GM12878 (cell line): ENCODE measurements at regions of chr3 and their contacts with region 1.

Region 1: DNA sequence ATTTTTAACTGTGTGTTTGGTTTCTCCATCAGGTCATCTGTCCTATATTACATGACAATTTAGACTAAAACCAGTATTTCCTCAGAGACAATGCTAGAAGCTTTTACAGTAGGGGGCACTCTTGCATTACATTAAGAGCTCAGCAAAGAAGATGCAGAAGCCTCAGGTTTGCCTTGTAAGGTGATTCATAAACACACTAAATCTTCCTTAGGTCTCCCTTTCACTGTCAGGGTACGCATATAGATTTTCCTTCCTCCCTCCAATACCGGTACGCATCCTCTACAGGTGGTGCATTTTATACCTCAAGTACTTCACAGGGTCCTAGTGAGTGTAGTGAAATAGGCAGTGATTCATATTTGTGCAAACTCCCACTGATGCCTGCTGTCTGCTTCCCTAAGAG is 46.5 kb downstream of the CD86 start:
- DNase-seq: peak; percentile 92
- ATAC-seq: peak; percentile 66
- H3K4me3 ChIP-seq: peak overlapping the region; percentile 17; the same call in 1 of the 2 replicates
- H3K27ac ChIP-seq: peak overlapping the region; percentile 76
- H3K4me1 ChIP-seq: peaks cover 71% of the 10 kb centered on the region
- H3K27me3 ChIP-seq: no peaks in the 10 kb centered on the region
- CTCF ChIP-seq: peak; percentile 57 to 88 (median 70)
- EP300 ChIP-seq: no peak
- POLR2A ChIP-seq: no peak
- RAD21 ChIP-seq: peak; percentile 97

Region 2: GRCh38 chr3:122004991-122005565 is 96.6 kb before region 1 on chr3:
- CTCF ChIA-PET with region 1: interaction called, 21 read pairs
- POLR2A ChIA-PET with region 1: interaction called, 19 read pairs
- RAD21 ChIA-PET with region 1: interaction called, 137 read pairs
- SMC1A ChIA-PET with region 1: interaction called, 882 read pairs
- in situ Hi-C with region 1: no loop called
- intact Hi-C with region 1: loop called (anchors 5 kb)
- DNase-seq: peak; percentile 74
- ATAC-seq: peak; percentile 78
- H3K4me3 ChIP-seq: peak overlapping the region; percentile 46; the same call in 1 of the 2 replicates
- H3K27ac ChIP-seq: peak overlapping the region; percentile 91
- H3K4me1 ChIP-seq: peaks cover 58% of the 10 kb centered on the region
- H3K27me3 ChIP-seq: no peaks in the 10 kb centered on the region
- CTCF ChIP-seq: 0 out of 6 replicates have a peak, but pooled peaks of 1 of the 3 experiments have one; percentile 3
- EP300 ChIP-seq: peak; percentile 11 to 65; a peak in 3 of 4 replicates
- POLR2A ChIP-seq: 0 out of 2 replicates have a peak, but pooled peaks have one; percentile 35
- RAD21 ChIP-seq: no peak

Region 3: DNA sequence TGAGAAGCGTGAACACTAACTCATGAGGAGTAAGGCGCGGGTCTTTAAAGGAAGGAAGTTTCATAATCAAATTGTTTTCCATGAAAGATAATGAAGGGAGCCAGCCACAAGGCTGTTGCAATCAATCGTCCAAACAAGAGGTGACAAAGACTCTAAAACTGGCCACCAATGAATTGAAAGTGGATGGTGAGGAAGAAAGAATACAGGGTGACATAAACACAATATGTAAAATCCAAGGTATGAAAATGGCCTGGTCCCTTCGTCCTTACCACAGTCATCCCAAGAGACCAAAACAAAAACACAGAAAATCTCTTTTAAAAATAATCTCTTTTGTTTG is 34.5 kb before region 1 on chr3:
- CTCF ChIA-PET with region 1: interaction called, 24 read pairs
- POLR2A ChIA-PET with region 1: interaction called, 14 read pairs
- RAD21 ChIA-PET with region 1: interaction called, 72 read pairs
- SMC1A ChIA-PET with region 1: interaction called, 93 read pairs
- in situ Hi-C with region 1: no loop called
- intact Hi-C with region 1: no loop called
- DNase-seq: no peak
- ATAC-seq: peak; percentile 66
- H3K4me3 ChIP-seq: peak overlapping the region; percentile 52; the same call in 1 of the 2 replicates
- H3K27ac ChIP-seq: peak overlapping the region; percentile 66
- H3K4me1 ChIP-seq: peaks cover 57% of the 10 kb centered on the region
- H3K27me3 ChIP-seq: no peaks in the 10 kb centered on the region
- CTCF ChIP-seq: no peak
- EP300 ChIP-seq: 0 out of 4 replicates have a peak, but pooled peaks have one; percentile 20 to 29
- POLR2A ChIP-seq: no peak
- RAD21 ChIP-seq: no peak

Region 4: GRCh38 chr3:122245513-122246174 is 144.0 kb after region 1 on chr3:
- CTCF ChIA-PET with region 1: interaction called, 11 read pairs
- POLR2A ChIA-PET with region 1: interaction called, 178 read pairs
- RAD21 ChIA-PET with region 1: interaction called, 441 read pairs
- SMC1A ChIA-PET with region 1: interaction called, 58 read pairs
- in situ Hi-C with region 1: no loop called
- intact Hi-C with region 1: no loop called
- DNase-seq: no peak
- ATAC-seq: peak; percentile 51
- H3K4me3 ChIP-seq: peak overlapping the region; percentile 66
- H3K27ac ChIP-seq: peak overlapping the region; percentile 63
- H3K4me1 ChIP-seq: peaks cover 14% of the 10 kb centered on the region
- H3K27me3 ChIP-seq: no peaks in the 10 kb centered on the region
- CTCF ChIP-seq: peak in 2 of 3 experiments; percentile 23 to 28; a peak in 2 of 6 replicates
- EP300 ChIP-seq: no peak
- POLR2A ChIP-seq: no peak
- RAD21 ChIP-seq: no peak

Region 5: DNA sequence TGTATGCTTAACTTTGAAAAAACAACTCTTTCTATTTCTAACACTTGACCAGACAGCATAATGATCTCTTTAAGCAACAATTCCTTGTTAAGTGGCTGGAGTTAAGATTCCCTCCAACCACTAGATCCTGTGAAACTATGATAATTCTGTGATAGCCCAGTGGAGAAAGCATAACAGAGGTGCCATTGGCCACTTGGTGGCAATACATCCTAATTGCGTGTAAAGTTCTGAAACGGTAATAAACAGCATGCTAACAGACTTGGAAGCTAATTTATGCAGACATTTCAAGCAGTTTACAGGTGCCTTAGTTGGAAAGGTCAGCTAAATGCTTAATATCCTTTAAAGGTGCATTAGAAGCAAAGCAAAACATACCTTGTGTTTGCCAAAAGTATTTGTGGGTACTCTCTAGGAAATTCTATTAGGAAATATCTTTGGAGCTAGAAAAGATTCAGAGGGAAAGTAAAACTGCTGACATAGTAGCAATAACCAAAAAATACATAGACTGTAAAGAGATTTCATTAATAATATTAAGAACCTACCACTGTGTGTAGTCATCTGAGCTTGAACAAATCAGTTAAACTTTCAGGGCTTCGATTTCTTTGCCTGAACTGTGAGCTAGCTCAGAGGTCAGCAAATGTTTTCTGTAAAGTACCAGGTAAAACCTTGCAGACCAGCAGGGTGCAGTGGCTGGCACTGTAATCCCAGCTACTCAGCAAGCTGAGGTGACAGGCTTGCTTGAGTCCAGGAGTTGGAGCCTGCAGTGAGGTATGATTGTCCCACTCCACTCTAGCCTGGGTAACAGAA is 204.4 kb after region 1 on chr3:
- CTCF ChIA-PET with region 1: interaction called, 81 read pairs
- POLR2A ChIA-PET with region 1: no interaction called
- RAD21 ChIA-PET with region 1: interaction called, 81 read pairs
- SMC1A ChIA-PET with region 1: interaction called, 94 read pairs
- in situ Hi-C with region 1: loop called (anchors 5 kb)
- intact Hi-C with region 1: no loop called
- DNase-seq: no peak
- ATAC-seq: peak; percentile 93
- H3K4me3 ChIP-seq: no peak overlapping the region
- H3K27ac ChIP-seq: no peak overlapping the region
- H3K4me1 ChIP-seq: peaks cover 30% of the 10 kb centered on the region
- H3K27me3 ChIP-seq: no peaks in the 10 kb centered on the region
- CTCF ChIP-seq: peak; percentile 30 to 57 (median 35); a peak in 4 of 6 replicates
- EP300 ChIP-seq: no peak
- POLR2A ChIP-seq: no peak
- RAD21 ChIP-seq: peak; percentile 62

Region 6: GRCh38 chr3:122615303-122615702 is 513.7 kb after region 1 on chr3:
- CTCF ChIA-PET with region 1: no interaction called
- POLR2A ChIA-PET with region 1: no interaction called
- RAD21 ChIA-PET with region 1: no interaction called
- SMC1A ChIA-PET with region 1: no interaction called
- in situ Hi-C with region 1: no loop called
- intact Hi-C with region 1: no loop called
- DNase-seq: no peak
- ATAC-seq: no peak
- H3K4me3 ChIP-seq: no peak overlapping the region
- H3K27ac ChIP-seq: no peak overlapping the region
- H3K4me1 ChIP-seq: peaks cover 17% of the 10 kb centered on the region
- H3K27me3 ChIP-seq: no peaks in the 10 kb centered on the region
- CTCF ChIP-seq: no peak
- EP300 ChIP-seq: no peak
- POLR2A ChIP-seq: no peak
- RAD21 ChIP-seq: no peak

Region 7: DNA sequence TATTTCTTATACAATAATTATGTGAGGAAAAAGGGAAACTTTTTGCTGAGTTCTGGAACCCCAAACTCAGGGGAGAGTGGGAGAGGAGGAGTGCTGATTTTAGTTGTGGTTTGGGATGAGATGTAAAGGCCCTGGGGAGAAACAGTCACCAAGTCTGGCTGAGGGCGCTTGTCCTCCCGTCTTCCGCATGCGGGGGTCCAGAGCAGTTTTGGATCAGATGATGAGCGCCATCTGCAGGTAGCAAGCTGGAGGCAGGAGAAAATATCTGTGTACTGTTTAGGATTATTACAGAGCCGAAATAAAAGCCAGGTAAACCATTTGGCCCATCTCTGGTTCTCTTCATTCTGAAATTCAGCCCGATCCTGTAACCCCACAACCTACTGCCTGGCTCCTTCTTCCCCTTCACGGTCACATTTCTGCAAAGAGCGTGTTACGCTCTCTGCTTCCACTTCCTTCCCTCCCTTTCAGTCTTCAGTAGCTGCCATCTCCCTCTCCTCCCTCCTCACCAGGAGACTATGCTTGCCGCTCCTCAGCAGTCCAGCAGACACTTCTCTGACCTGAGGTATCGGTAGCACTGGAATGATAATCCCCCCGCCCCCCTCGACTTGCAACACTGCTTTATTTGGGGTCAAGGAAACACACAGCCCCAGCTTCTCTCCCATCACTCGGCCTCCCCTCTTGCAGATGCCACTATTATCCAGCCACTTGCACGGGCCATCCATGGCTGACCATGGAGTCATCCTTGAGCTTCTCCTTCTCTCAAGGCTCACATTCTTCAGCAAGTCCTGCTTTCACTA is 577.6 kb after region 1 on chr3:
- CTCF ChIA-PET with region 1: interaction called, 6 read pairs
- POLR2A ChIA-PET with region 1: no interaction called
- RAD21 ChIA-PET with region 1: interaction called, 10 read pairs
- SMC1A ChIA-PET with region 1: interaction called, 4 read pairs
- in situ Hi-C with region 1: loop called (anchors 10 kb)
- intact Hi-C with region 1: loop called (anchors 1 kb)
- DNase-seq: no peak
- ATAC-seq: peak; percentile 70
- H3K4me3 ChIP-seq: peak overlapping the region; percentile 97
- H3K27ac ChIP-seq: peak overlapping the region; percentile 97
- H3K4me1 ChIP-seq: peaks cover 16% of the 10 kb centered on the region
- H3K27me3 ChIP-seq: no peaks in the 10 kb centered on the region
- CTCF ChIP-seq: peak; percentile 75 to 91 (median 80)
- EP300 ChIP-seq: peak in 1 of 2 experiments; percentile 6; a peak in 1 of 4 replicates
- POLR2A ChIP-seq: no peak
- RAD21 ChIP-seq: peak; percentile 95